ENCODE measurements at regions of chr3 and their contacts with region 1.

Region 1: GRCh38 chr3:126197854-126198584 is 17.6 kb upstream of the ALDH1L1 start:
- DNase-seq: peak; percentile 38 to 76 (median 56)
- ATAC-seq: peak; percentile 73 to 96 (median 86)
- H3K4me3 ChIP-seq: no peak overlapping the region
- H3K27ac ChIP-seq: peak overlapping the region in 2 of 12 donors; percentile 4 to 25
- H3K4me1 ChIP-seq: no peaks in the 10 kb centered on the region
- H3K27me3 ChIP-seq: no peaks in the 10 kb centered on the region
- CTCF ChIP-seq: peak; percentile 52 to 76 (median 65)
- POLR2A ChIP-seq: no peak

Region 2: DNA sequence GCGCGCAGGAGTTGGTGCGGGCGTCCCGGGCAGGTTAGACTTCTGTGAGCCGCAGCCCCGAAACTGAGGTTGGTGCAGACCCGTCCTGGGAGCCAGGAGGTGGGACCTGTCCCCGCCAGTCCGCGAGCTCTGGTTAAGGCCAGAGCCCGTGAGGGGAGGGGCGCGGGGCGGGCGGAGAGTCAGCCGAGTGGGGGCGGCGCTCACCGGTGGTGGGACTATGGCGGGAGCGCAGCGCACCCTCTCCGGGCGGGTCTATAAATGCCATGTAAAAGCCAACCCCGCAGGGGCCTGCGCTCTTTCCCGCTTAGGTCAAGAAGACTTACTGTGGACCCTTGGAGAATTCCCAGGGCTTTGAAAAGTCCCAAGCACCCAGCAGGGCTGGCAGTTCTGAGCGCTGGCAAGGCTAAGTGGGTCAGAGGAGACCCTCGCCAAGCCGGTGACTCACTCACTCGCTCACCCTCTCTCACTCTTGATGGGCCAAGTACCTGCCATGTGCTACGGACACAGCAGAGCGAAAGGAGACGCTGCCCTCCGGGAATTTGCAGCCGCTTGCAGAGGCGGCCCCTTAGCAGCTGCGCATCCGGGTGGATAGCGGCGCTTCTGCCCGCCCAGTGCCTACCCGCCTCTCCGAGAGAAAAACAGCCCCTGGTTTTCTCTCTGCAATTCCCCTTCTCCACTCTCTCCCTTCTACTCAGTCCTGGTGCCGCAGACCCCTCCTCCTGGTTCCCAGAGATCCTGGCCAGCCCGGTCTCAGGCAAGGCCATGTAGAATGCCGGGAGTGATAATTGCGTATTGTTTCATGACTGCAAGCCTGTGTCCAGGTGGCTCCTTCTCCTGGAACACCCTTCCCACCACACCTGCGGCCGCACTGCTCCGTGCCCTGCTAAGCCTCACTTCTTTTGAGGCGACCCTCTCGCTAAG is 17.3 kb before region 1 on chr3 and contains the start of gene ALDH1L1:
- intact Hi-C with region 1: loop called in 1 of 10 experiments (anchors 2 kb)
- DNase-seq: peak; percentile 71 to 93 (median 89)
- ATAC-seq: peak; percentile 93 to 96 (median 94)
- H3K4me3 ChIP-seq: peak within 1 kb of the TSS; percentile 58 to 87 (median 66)
- H3K27ac ChIP-seq: peak within 1 kb of the TSS; percentile 71 to 97 (median 92)
- H3K4me1 ChIP-seq: peaks cover 0 to 36% (median 3%) of the 10 kb centered on the region in 12 donors
- H3K27me3 ChIP-seq: peaks cover 0 to 28% (median 0%) of the 10 kb centered on the region in 9 donors
- CTCF ChIP-seq: no peak
- POLR2A ChIP-seq: peak in 1 of 2 donors; percentile 21
- total RNA-seq, gene ALDH1L1: 26.9 to 74.1 (median 29.4) TPM

Region 3: GRCh38 chr3:126468028-126468891 is 270.2 kb after region 1 on chr3:
- intact Hi-C with region 1: no loop called
- DNase-seq: peak in 1 of 5 donors; percentile 15
- ATAC-seq: peak in 1 of 4 donors; percentile 19
- H3K4me3 ChIP-seq: no peak overlapping the region
- H3K27ac ChIP-seq: peak overlapping the region in 2 of 12 donors; percentile 35 to 54
- H3K4me1 ChIP-seq: peaks cover 0 to 83% (median 33%) of the 10 kb centered on the region in 12 donors
- H3K27me3 ChIP-seq: no peaks in the 10 kb centered on the region
- CTCF ChIP-seq: no peak
- POLR2A ChIP-seq: no peak